ENCODE measurements at regions of chr1 and their contacts with region 1.

Region 1: GRCh38 chr1:202192770-202193613 is 607 bp upstream of the LGR6 start:
- DNase-seq: peak; percentile 68
- ATAC-seq: peak; percentile 57
- H3K4me3 Mint-ChIP-seq: no peak overlapping the region
- H3K27ac Mint-ChIP-seq: no peak overlapping the region
- H3K4me1 Mint-ChIP-seq: peaks cover 6% of the 10 kb centered on the region
- H3K27me3 Mint-ChIP-seq: peaks cover 30% of the 10 kb centered on the region

Region 2: GRCh38 chr1:202144402-202145067 is 48.5 kb before region 1 on chr1 and contains the start of gene ARL8A:
- CTCF ChIA-PET with region 1: no interaction called
- POLR2A ChIA-PET with region 1: no interaction called
- DNase-seq: peak; percentile 74
- ATAC-seq: peak; percentile 85
- H3K4me3 Mint-ChIP-seq: peak within 1 kb of the TSS; percentile 98
- H3K27ac Mint-ChIP-seq: peak within 1 kb of the TSS; percentile 94
- H3K4me1 Mint-ChIP-seq: peaks cover 28% of the 10 kb centered on the region
- H3K27me3 Mint-ChIP-seq: no peaks in the 10 kb centered on the region
- total RNA-seq, gene ARL8A: 39.7 to 42.0 TPM

Region 3: DNA sequence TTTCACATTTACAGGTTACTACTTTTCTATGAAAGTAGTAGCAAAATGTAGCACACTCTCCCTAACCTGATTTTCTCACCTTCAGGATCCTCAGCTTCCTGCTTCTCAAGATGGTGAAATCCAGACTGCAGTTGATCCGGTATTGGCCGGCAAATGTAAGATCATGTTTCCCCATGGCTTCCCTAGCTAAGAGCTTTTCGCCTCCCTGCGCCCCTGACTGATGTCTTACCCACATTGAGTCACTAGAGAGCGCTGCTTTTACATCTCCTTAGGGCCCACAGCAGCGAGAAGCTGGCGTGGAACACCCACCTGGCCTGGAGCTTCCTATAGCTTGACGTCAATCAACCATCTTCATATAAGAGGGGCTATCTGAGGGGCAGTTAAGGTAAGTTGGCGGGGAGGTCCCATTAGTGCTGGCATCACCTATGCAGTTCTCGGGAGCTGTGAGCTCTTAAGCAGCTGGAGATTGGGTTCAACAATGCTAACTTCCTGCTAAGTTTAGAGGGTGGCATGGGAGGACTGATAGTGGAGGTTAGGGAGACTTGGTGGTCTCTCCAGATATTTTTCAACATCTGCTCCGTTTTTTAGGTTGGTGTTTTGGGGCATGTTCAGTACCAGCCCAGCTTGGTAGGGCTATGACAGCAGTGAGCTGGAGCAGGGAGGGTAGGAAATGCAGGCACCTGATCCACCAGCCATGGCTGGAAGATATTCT is 38.1 kb before region 1 on chr1:
- CTCF ChIA-PET with region 1: interaction called, 28 read pairs
- POLR2A ChIA-PET with region 1: interaction called, 4 read pairs
- DNase-seq: peak; percentile 74
- ATAC-seq: peak; percentile 54
- H3K4me3 Mint-ChIP-seq: peak overlapping the region; percentile 3
- H3K27ac Mint-ChIP-seq: peak overlapping the region; percentile 53
- H3K4me1 Mint-ChIP-seq: peaks cover 55% of the 10 kb centered on the region
- H3K27me3 Mint-ChIP-seq: no peaks in the 10 kb centered on the region

Region 4: GRCh38 chr1:202160377-202160940 is 32.5 kb before region 1 on chr1 and contains the start of gene PTPN7:
- CTCF ChIA-PET with region 1: interaction called, 28 read pairs
- POLR2A ChIA-PET with region 1: no interaction called
- DNase-seq: peak; percentile 82
- ATAC-seq: peak; percentile 54
- H3K4me3 Mint-ChIP-seq: peak within 1 kb of the TSS; percentile 91
- H3K27ac Mint-ChIP-seq: peak within 1 kb of the TSS; percentile 100
- H3K4me1 Mint-ChIP-seq: peaks cover 83% of the 10 kb centered on the region
- H3K27me3 Mint-ChIP-seq: no peaks in the 10 kb centered on the region
- total RNA-seq, gene PTPN7: 242 to 255 TPM

Region 5: GRCh38 chr1:202210385-202210784 is 17.4 kb after region 1 on chr1:
- CTCF ChIA-PET with region 1: interaction called, 10 read pairs
- POLR2A ChIA-PET with region 1: no interaction called
- DNase-seq: peak; percentile 37
- ATAC-seq: peak; percentile 60
- H3K4me3 Mint-ChIP-seq: no peak overlapping the region
- H3K27ac Mint-ChIP-seq: no peak overlapping the region
- H3K4me1 Mint-ChIP-seq: peaks cover 7% of the 10 kb centered on the region
- H3K27me3 Mint-ChIP-seq: peaks cover 40% of the 10 kb centered on the region

Region 6: DNA sequence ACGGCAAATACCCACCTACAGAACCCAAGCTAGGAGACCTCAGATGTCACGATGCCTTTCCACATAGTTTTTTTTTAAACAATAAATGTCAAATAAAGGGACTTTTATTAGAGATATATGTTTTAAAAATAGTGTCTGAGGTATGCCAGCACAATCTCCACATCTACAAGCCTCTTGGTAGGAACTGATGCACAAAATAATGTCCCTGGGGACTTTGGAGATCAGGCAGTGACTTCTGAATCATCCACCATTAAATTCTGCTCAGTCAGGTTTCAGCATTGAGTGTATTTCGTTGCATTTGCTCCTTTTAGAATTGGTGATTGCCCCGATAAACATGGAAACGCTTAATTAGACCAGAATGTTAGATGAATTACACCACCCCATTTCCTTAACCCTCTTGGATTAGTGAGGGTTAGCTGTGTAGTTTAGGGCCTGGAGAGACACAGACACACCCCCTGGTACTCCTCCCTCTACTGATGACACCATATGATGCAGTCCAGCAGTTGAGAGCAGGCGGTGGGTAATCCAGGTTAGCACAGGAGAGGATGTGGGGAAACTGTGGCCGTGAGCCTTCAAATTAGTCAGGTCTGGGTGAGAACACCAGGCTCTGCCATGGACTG is 34.2 kb after region 1 on chr1:
- CTCF ChIA-PET with region 1: interaction called, 10 read pairs
- POLR2A ChIA-PET with region 1: no interaction called
- DNase-seq: peak; percentile 44
- ATAC-seq: peak; percentile 35
- H3K4me3 Mint-ChIP-seq: no peak overlapping the region
- H3K27ac Mint-ChIP-seq: no peak overlapping the region
- H3K4me1 Mint-ChIP-seq: peaks cover 27% of the 10 kb centered on the region
- H3K27me3 Mint-ChIP-seq: peaks cover 12% of the 10 kb centered on the region

Region 7: GRCh38 chr1:202274611-202275010 is 81.6 kb after region 1 on chr1:
- CTCF ChIA-PET with region 1: interaction called, 12 read pairs
- POLR2A ChIA-PET with region 1: no interaction called
- DNase-seq: peak; percentile 69
- ATAC-seq: peak; percentile 80
- H3K4me3 Mint-ChIP-seq: no peak overlapping the region
- H3K27ac Mint-ChIP-seq: no peak overlapping the region
- H3K4me1 Mint-ChIP-seq: peaks cover 3% of the 10 kb centered on the region
- H3K27me3 Mint-ChIP-seq: peaks cover 24% of the 10 kb centered on the region

Region 8: DNA sequence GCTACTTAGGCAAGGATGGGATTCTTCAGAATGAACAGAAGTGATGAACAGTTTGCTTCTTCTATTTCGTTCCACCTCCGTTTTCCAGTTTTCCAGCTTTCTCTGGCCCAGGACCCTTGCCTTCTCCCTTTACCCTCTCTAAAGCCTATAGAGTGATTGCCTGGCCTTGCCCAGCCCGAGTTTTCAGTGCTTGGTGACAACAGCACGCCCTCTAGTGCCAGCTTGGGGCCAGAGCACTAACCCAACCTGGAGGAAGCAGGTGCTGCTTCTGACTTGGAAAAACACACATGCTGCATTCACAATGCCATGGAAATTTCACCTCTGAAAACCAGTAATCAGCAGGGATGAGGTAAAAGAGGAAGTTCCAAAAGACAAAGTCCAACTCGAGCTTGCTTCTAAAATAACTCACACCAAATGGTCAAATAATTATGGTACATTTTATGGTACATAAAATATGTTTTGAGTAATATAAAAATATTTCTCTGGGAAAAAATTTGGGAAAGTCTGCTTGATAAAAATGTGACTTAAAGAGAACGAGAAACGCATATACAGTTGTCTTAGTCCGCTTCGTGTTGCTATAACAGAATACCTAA is 122.7 kb after region 1 on chr1:
- CTCF ChIA-PET with region 1: interaction called, 40 read pairs
- POLR2A ChIA-PET with region 1: interaction called, 3 read pairs
- DNase-seq: peak; percentile 85
- ATAC-seq: peak; percentile 89
- H3K4me3 Mint-ChIP-seq: no peak overlapping the region
- H3K27ac Mint-ChIP-seq: no peak overlapping the region
- H3K4me1 Mint-ChIP-seq: peaks cover 14% of the 10 kb centered on the region
- H3K27me3 Mint-ChIP-seq: peaks cover 21% of the 10 kb centered on the region

Measured in activated CD8-positive, alpha-beta T cell treated with anti-CD3 and anti-CD28 coated beads, Interleukin-2, amount 10 ng/mL, durations not matched to agents 7 days and 5 days (primary cell).